ENCODE measurements at regions of chr7 and their contacts with region 1.

Region 1: DNA sequence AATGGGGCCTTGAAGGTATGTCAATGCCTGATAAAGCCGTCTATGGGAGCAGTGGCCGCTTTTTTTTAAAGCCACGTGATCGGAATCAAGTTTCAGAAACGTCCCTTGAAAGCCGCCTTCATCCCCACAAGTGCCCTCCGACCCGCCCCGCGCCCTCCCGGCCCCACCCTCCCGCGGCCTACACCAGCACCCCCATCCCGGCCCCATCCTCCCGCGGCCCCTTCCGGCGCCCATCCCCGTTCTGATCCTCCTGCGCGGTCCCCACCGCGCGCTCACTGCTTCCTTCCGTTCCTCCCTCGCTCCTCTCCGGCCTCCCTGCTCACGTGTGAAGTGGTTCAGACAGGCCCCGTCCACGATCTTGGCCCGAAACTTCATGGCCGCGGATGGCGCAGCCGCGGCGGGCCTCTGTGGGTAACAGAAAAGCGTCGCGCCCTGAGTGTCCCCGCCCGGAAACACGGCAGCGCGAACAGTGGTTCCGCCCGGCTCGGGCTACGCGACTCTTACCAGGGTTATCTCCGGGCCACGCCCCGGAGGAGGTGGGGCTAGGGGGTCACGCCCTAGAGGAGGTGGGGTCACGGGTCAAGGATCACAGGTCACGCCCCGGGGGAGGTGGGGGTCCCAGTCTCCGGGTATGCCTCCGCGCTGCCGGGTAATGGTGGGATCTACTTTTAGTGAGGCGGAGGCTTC is at the start of gene HUS1:
- DNase-seq: peak; percentile 86
- ATAC-seq: peak; percentile 98
- H3K4me3 ChIP-seq: peak within 1 kb of the TSS; percentile 90
- H3K27ac ChIP-seq: peak within 1 kb of the TSS; percentile 53
- H3K4me1 ChIP-seq: peaks cover 10% of the 10 kb centered on the region
- H3K27me3 ChIP-seq: no peaks in the 10 kb centered on the region
- CTCF ChIP-seq: no peak
- total RNA-seq, gene HUS1: 15.3 and 23.2 TPM in 2 replicates

Region 2: GRCh38 chr7:47571331-47572093 is 407.8 kb before region 1 on chr7:
- CTCF ChIA-PET with region 1: no interaction called
- POLR2A ChIA-PET with region 1: no interaction called
- intact Hi-C with region 1: no loop called
- DNase-seq: peak; percentile 84
- ATAC-seq: peak; percentile 50
- H3K4me3 ChIP-seq: peak overlapping the region; percentile 40
- H3K27ac ChIP-seq: peak overlapping the region; percentile 95
- H3K4me1 ChIP-seq: peaks cover 62% of the 10 kb centered on the region
- H3K27me3 ChIP-seq: no peaks in the 10 kb centered on the region
- CTCF ChIP-seq: no peak

Region 3: DNA sequence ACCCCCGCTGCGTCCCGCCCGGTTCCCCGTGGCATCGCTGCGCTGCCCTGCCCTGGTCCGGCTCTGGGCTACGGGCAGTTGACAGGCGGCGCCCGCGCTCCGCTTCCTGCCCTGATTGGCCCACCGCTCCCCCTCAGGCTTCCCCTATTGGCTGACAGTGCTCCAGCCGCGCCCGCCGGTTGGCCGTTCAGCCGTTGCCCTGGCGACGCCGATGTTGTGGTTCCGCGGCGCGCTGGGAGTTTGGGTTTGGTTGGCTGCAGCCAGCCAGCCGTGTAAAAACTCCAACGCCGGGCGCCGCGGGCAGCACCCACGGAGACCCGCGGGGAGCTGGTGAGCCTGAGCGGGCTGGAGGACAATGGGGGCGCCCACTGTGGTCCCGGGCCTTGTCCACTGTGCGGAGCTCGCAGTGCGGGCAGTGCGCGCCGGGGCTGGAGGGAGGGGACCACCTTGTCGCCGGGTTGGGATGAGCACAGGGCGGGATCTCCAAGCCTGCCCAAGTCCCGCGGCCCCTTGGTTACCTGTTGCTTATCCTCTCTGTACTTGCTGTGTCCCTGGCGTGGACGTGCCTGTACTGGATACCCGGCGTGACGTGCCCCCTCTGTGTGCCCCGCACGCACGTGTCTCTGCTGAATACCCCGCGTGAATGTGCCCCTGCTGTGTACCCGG is 56.1 kb after region 1 on chr7 and contains the start of gene C7orf57:
- CTCF ChIA-PET with region 1: no interaction called
- POLR2A ChIA-PET with region 1: no interaction called
- intact Hi-C with region 1: loop called (anchors 2 kb)
- DNase-seq: peak; percentile 83
- ATAC-seq: peak; percentile 95
- H3K4me3 ChIP-seq: peak within 1 kb of the TSS; percentile 74
- H3K27ac ChIP-seq: no peak within 1 kb of the TSS
- H3K4me1 ChIP-seq: peaks cover 10% of the 10 kb centered on the region
- H3K27me3 ChIP-seq: no peaks in the 10 kb centered on the region
- CTCF ChIP-seq: no peak
- total RNA-seq, gene C7orf57: 0.15 TPM in 1 of 2 replicates, not detected in the other

Region 4: GRCh38 chr7:48088559-48089045 is 109.3 kb after region 1 on chr7:
- CTCF ChIA-PET with region 1: no interaction called
- POLR2A ChIA-PET with region 1: interaction called, 3 read pairs
- intact Hi-C with region 1: loop called (anchors 2 kb)
- DNase-seq: peak; percentile 83
- ATAC-seq: peak; percentile 33
- H3K4me3 ChIP-seq: peak overlapping the region; percentile 94
- H3K27ac ChIP-seq: peak overlapping the region; percentile 99
- H3K4me1 ChIP-seq: peaks cover 56% of the 10 kb centered on the region
- H3K27me3 ChIP-seq: no peaks in the 10 kb centered on the region
- CTCF ChIP-seq: no peak

Measured in PC-3 (cell line).